PC-3 (cell line): ENCODE measurements at regions of chr13 and their contacts with region 1.

Region 1: GRCh38 chr13:98977568-98978265 is at the start of gene DOCK9:
- DNase-seq: peak; percentile 25
- ATAC-seq: peak; percentile 87
- H3K4me3 ChIP-seq: peak within 1 kb of the TSS; percentile 39
- H3K27ac ChIP-seq: peak within 1 kb of the TSS; percentile 71
- H3K4me1 ChIP-seq: peaks cover 34% of the 10 kb centered on the region
- H3K27me3 ChIP-seq: no peaks in the 10 kb centered on the region
- CTCF ChIP-seq: no peak
- total RNA-seq, gene DOCK9: 31.7 and 36.5 TPM in 2 replicates

Region 2: GRCh38 chr13:98890186-98890585 is 87.5 kb before region 1 on chr13:
- CTCF ChIA-PET with region 1: no interaction called
- POLR2A ChIA-PET with region 1: no interaction called
- intact Hi-C with region 1: loop called (anchors 5 kb)
- DNase-seq: peak; percentile 90
- ATAC-seq: peak; percentile 88
- H3K4me3 ChIP-seq: peak overlapping the region; percentile 43; the same call in 1 of the 2 replicates
- H3K27ac ChIP-seq: peak overlapping the region; percentile 77
- H3K4me1 ChIP-seq: peaks cover 26% of the 10 kb centered on the region
- H3K27me3 ChIP-seq: no peaks in the 10 kb centered on the region
- CTCF ChIP-seq: no peak

Region 3: DNA sequence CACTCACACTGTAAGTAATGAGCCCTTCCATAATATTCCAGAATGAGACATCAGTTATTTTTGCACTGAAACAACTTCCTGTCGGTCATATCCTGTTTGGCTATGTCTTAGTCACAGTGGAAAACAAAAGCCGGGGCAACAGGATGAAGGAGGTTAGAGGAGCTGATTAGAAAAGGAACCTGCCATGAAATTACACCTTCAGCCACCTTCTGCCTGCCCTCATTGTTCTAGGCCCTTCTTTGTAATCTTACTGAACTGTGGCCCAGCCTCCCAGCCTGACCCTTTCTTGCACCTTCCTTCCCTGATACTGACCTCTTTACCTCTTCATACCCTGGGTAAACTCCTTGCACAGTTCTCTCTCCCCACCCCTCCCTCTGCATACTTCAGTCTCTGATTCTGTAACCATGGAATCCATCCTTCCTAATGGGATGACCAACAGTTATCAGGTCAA is 67.2 kb before region 1 on chr13:
- CTCF ChIA-PET with region 1: no interaction called
- POLR2A ChIA-PET with region 1: no interaction called
- intact Hi-C with region 1: loop called (anchors 5 kb)
- DNase-seq: peak; percentile 75
- ATAC-seq: peak; percentile 84
- H3K4me3 ChIP-seq: no peak overlapping the region
- H3K27ac ChIP-seq: peak overlapping the region; percentile 88
- H3K4me1 ChIP-seq: peaks cover 31% of the 10 kb centered on the region
- H3K27me3 ChIP-seq: no peaks in the 10 kb centered on the region
- CTCF ChIP-seq: no peak

Region 4: DNA sequence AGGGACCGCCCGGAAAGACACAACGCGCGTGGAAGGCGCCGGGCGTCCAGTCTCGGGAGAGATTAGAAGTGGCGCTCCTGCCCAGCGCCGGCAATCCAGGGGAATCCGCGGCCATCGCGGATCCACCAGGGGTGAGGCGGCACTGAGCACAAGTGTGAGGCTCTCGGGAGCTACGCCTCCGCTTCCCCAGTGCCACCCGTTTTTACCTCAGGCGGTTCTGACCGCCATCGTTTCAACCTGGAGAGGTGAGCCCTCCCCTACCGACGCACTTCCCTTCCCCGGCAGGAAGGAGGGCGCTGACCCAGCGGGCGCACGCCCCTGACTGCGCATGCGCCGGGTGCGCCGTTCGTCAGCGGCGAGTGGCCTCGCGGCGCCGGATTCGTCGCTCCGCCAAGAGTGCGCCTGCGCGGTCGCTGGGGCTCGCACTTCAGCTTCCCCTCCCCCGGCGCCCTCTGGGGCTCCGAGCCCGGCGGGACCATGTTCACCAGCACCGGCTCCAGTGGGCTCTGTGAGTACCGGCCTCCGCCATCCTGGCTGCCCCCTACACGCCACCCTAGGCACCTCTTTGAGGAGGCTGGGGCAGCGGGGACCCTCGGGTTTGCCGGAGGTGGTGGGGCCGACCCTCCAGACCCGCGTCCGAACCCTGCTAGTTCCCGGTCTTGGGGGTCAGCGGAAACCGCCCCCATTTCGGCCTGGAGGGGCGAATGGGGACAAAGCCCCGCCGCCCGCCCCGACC is 222.9 kb after region 1 on chr13 and contains the start of gene UBAC2:
- CTCF ChIA-PET with region 1: no interaction called
- POLR2A ChIA-PET with region 1: interaction called, 32 read pairs
- intact Hi-C with region 1: no loop called
- DNase-seq: peak; percentile 94
- ATAC-seq: peak; percentile 64
- H3K4me3 ChIP-seq: peak within 1 kb of the TSS; percentile 99
- H3K27ac ChIP-seq: peak within 1 kb of the TSS; percentile 93
- H3K4me1 ChIP-seq: peaks cover 46% of the 10 kb centered on the region
- H3K27me3 ChIP-seq: no peaks in the 10 kb centered on the region
- CTCF ChIP-seq: no peak
- total RNA-seq, gene UBAC2: 34.5 and 37.1 TPM in 2 replicates